Caco-2 (cell line): ENCODE measurements at regions of chr16 and their contacts with region 1.

Region 1: DNA sequence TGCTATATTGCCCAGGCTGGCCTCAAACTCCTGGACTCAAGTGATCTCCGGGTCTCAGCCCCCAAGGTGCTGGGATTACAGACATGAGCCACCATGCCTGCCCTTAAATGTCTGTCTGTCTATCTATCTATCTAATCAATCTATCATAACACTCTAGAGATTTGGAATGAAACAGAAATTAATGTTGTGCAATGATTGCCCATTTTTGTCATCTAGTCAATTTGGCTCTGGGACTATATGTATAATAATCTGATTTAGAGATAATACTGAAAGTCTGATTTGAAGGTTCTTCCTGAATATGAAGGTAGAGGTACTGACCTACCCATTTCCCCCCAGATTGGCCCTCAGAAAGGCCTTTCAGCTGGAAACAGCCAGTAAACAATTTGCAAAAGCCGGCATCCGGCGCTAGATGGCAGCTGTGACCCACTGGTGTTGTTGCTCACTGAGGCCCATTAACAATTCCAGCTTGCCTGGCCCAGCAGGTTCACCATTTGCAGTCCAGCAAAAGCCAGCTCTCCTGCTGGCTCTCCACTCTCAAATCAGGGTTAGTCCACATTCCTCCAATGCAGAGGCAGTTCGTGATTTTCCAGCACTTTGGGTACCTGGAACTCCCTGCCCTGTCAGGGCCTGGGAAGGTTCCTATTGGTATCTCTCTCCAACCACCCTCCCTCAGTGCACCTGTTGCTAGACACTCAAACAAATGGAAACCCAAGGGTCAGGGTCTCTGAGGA is 22.9 kb upstream of the C16orf87 start:
- DNase-seq: peak; percentile 85 to 86
- H3K4me3 ChIP-seq: no peak overlapping the region
- H3K4me3 Mint-ChIP-seq: no peak overlapping the region
- H3K27ac Mint-ChIP-seq: no peak overlapping the region
- H3K4me1 ChIP-seq: peaks cover 49% of the 10 kb centered on the region
- H3K4me1 Mint-ChIP-seq: peaks cover 50% of the 10 kb centered on the region
- H3K27me3 ChIP-seq: no peaks in the 10 kb centered on the region
- H3K27me3 Mint-ChIP-seq: no peaks in the 10 kb centered on the region
- CTCF ChIP-seq: peak; percentile 83 to 87

Region 2: GRCh38 chr16:46871587-46871986 is 17.7 kb after region 1 on chr16:
- CTCF ChIA-PET with region 1: interaction called, 16 read pairs
- POLR2A ChIA-PET with region 1: interaction called, 10 read pairs
- intact Hi-C with region 1: loop called (anchors 1 kb)
- DNase-seq: no peak
- H3K4me3 ChIP-seq: no peak overlapping the region
- H3K4me3 Mint-ChIP-seq: no peak overlapping the region
- H3K27ac Mint-ChIP-seq: no peak overlapping the region
- H3K4me1 ChIP-seq: peaks cover 20% of the 10 kb centered on the region
- H3K4me1 Mint-ChIP-seq: peaks cover 19% of the 10 kb centered on the region
- H3K27me3 ChIP-seq: no peaks in the 10 kb centered on the region
- H3K27me3 Mint-ChIP-seq: no peaks in the 10 kb centered on the region
- CTCF ChIP-seq: no peak

Region 3: DNA sequence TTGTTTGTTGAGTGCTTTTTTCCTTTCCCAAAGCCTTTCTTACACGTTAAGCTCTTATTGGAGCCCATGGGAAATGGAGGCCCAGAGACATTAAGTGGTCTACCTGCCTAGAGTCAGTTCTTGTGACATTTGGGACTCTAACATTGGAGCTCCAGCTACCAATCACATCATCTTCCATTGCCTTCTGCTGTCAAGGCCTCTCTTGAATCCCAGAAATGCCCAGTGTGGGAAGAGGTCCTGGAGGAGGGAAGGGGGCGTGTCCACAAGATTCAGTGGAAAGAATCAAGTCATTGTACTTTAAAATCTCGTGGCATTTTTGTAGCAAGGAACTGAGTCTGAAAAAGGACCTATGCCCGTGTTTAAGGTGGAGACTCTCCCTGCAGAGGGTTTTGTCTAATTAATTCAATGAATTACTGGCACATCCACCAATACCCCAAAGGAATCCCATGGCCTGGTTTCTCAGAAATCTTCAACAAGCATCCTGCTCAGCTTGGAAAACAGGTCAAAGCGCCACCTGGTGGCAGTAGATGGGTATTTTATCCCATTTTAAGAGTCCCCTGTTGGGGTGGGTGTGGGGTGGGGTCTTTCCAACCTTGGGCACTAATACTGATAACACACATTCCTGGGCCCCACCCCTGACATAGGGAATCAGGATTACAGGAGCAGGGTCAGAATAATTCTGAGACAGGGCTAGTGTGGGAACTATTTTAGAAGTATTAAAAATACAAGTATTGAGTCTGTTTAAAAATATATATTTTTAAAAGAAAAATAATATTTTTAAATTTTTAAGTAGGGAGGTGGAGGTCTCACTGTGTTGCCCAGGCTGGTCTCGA is 54.9 kb after region 1 on chr16:
- CTCF ChIA-PET with region 1: interaction called, 41 read pairs
- POLR2A ChIA-PET with region 1: interaction called, 4 read pairs
- intact Hi-C with region 1: loop called (anchors 1 kb)
- DNase-seq: peak; percentile 68 to 73
- H3K4me3 ChIP-seq: no peak overlapping the region
- H3K4me3 Mint-ChIP-seq: no peak overlapping the region
- H3K27ac Mint-ChIP-seq: no peak overlapping the region
- H3K4me1 ChIP-seq: peaks cover 6% of the 10 kb centered on the region; the same call in 1 of the 2 replicates
- H3K4me1 Mint-ChIP-seq: peaks cover 6% of the 10 kb centered on the region
- H3K27me3 ChIP-seq: no peaks in the 10 kb centered on the region
- H3K27me3 Mint-ChIP-seq: no peaks in the 10 kb centered on the region
- CTCF ChIP-seq: peak; percentile 69 to 77

Region 4: GRCh38 chr16:46929378-46930332 is 75.8 kb after region 1 on chr16:
- CTCF ChIA-PET with region 1: interaction called, 7 read pairs
- POLR2A ChIA-PET with region 1: no interaction called
- intact Hi-C with region 1: loop called (anchors 1 kb)
- DNase-seq: peak in 1 of 2 experiments; percentile 74
- H3K4me3 ChIP-seq: no peak overlapping the region
- H3K4me3 Mint-ChIP-seq: no peak overlapping the region
- H3K27ac Mint-ChIP-seq: peak overlapping the region; percentile 72
- H3K4me1 ChIP-seq: no peaks in the 10 kb centered on the region
- H3K4me1 Mint-ChIP-seq: peaks cover 6% of the 10 kb centered on the region
- H3K27me3 ChIP-seq: no peaks in the 10 kb centered on the region
- H3K27me3 Mint-ChIP-seq: no peaks in the 10 kb centered on the region
- CTCF ChIP-seq: peak; percentile 71 to 82

Region 5: DNA sequence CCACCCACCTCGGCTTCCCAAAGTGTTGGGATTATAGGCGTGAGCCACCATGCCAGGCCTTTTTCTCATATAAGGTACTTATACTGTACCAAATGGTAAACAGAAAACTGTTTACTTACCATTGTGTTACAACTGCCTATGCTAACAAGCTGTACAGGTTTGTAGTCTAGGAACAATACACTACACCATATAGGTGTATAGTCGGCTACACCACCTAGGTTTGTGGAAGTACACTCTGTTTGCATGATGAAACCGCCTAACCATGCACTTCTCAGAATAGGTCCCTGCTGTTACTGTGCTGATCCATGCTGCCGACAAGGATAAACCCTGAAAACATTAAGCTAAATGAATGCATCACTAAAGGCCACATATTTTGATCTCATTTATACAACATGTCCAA is 100.7 kb after region 1 on chr16:
- CTCF ChIA-PET with region 1: no interaction called
- POLR2A ChIA-PET with region 1: no interaction called
- intact Hi-C with region 1: no loop called
- DNase-seq: no peak
- H3K4me3 ChIP-seq: no peak overlapping the region
- H3K4me3 Mint-ChIP-seq: no peak overlapping the region
- H3K27ac Mint-ChIP-seq: no peak overlapping the region
- H3K4me1 ChIP-seq: peaks cover 7% of the 10 kb centered on the region
- H3K4me1 Mint-ChIP-seq: peaks cover 7% of the 10 kb centered on the region
- H3K27me3 ChIP-seq: no peaks in the 10 kb centered on the region
- H3K27me3 Mint-ChIP-seq: no peaks in the 10 kb centered on the region
- CTCF ChIP-seq: no peak

Region 6: GRCh38 chr16:48164907-48165726 is 1311.2 kb after region 1 on chr16:
- CTCF ChIA-PET with region 1: interaction called, 4 read pairs
- POLR2A ChIA-PET with region 1: no interaction called
- intact Hi-C with region 1: loop called (anchors 10 kb)
- DNase-seq: peak; percentile 78 to 86
- H3K4me3 ChIP-seq: peak overlapping the region; percentile 5; the same call in 1 of the 2 replicates
- H3K4me3 Mint-ChIP-seq: peak overlapping the region; percentile 68
- H3K27ac Mint-ChIP-seq: peak overlapping the region; percentile 81
- H3K4me1 ChIP-seq: peaks cover 12% of the 10 kb centered on the region
- H3K4me1 Mint-ChIP-seq: peaks cover 16% of the 10 kb centered on the region
- H3K27me3 ChIP-seq: no peaks in the 10 kb centered on the region
- H3K27me3 Mint-ChIP-seq: no peaks in the 10 kb centered on the region
- CTCF ChIP-seq: peak; percentile 82 to 91